B cell (primary cell): ENCODE measurements at regions of chr1 and their contacts with region 1.

Region 1: DNA sequence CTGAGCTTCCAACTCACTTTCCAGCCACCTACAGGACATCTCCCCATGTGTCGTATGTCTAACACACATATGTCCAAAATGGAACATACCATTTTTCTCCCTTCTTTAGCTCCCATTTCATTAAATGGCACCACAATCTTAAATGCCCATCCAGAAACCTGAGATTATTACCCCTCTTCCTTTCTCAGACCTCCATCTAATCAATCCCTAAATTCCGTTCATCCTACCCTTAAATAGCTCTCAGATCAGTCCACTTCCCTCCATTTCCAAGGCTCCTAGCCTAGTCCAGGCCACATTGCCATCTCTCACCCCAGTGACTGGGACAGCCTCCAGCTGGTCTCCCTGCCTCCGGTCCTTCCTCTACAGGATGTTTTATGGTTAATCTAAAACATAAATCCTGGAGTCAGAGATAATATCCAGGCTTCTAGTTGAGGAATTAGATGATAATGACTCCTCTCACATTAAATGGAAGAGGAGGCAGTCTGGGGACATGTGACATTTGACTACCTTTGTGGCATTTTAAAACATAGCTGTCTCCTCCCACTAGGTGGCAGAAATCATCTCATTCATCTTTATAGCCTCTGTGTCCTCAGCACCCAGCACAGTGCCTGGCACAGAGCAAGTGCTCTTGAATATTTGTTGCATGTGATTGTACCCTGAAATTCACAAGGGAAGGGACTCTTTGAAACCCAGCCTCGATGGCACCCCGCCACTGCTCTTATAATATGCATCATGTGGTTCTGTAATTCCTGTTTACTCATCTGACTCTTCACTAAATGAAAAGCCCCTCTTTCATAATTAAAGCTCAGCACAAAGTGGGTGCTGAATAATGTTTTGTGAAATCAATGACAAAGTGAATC is 102.3 kb downstream of the TMEM53 start:
- DNase-seq: peak; percentile 46
- ATAC-seq: no peak
- H3K4me3 ChIP-seq: no peak overlapping the region
- H3K4me3 Mint-ChIP-seq: no peak overlapping the region
- H3K27ac ChIP-seq: no peak overlapping the region
- H3K27ac Mint-ChIP-seq: no peak overlapping the region
- H3K4me1 ChIP-seq: no peaks in the 10 kb centered on the region
- H3K4me1 Mint-ChIP-seq: no peaks in the 10 kb centered on the region
- H3K27me3 ChIP-seq: peaks cover 0 to 4% (median 0%) of the 10 kb centered on the region in 4 experiments
- H3K27me3 Mint-ChIP-seq: peaks cover 36% of the 10 kb centered on the region
- CTCF ChIP-seq: peak; percentile 65

Region 2: DNA sequence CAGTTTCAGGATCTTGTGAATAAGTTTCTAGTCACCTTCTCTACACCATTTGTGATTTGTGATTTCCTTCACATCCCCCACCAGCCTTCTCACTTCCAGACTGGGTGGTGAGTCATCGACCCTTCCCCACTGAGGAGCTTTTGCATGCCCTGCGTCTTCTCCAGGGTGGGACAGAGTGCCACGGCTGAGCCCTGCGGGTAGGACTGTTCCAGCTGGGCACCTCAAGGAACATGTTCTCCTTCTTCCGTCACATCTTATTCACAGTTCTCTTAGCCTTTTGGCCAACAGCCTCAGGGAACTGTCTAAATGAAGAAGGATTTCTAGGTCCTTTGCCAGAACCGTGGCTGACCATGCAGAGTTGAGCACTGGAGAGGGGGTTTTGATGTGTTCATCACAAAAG is 14.2 kb before region 1 on chr1:
- CTCF ChIA-PET with region 1: interaction called, 15 read pairs
- POLR2A ChIA-PET with region 1: no interaction called
- intact Hi-C with region 1: no loop called
- DNase-seq: no peak
- ATAC-seq: no peak
- H3K4me3 ChIP-seq: no peak overlapping the region
- H3K4me3 Mint-ChIP-seq: no peak overlapping the region
- H3K27ac ChIP-seq: no peak overlapping the region
- H3K27ac Mint-ChIP-seq: no peak overlapping the region
- H3K4me1 ChIP-seq: no peaks in the 10 kb centered on the region
- H3K4me1 Mint-ChIP-seq: peaks cover 3% of the 10 kb centered on the region
- H3K27me3 ChIP-seq: peaks cover 0 to 4% (median 0%) of the 10 kb centered on the region in 4 experiments
- H3K27me3 Mint-ChIP-seq: peaks cover 33% of the 10 kb centered on the region
- CTCF ChIP-seq: no peak